AG04449 (cell line): ENCODE measurements at regions of chr1 and their contacts with region 1.

Region 1: DNA sequence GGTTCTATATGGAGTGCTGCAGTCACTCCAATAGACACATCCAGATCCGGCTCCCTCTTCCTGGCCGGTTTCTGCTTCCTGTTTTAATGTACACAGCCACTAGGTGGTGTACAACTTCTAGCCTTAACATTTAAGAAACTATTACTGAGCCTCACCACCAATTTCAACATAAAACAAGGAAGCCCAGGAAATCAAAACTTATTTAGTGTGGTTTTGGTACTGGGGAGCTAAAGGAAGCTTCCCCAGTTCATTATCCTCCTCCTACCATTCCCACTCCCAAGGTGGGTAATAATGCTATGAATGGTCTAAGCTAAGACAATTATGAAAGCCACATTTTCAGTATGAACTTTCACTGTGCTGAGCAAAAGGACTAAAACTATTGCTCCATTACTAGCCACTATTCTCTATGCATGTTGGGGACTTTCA is 25.5 kb upstream of the MTMR11 start:
- DNase-seq: peak; percentile 41
- H3K4me3 ChIP-seq: no peak overlapping the region
- CTCF ChIP-seq: peak; percentile 53

Region 2: GRCh38 chr1:149923626-149924025 is 38.5 kb before region 1 on chr1:
- CTCF ChIA-PET with region 1: no interaction called
- POLR2A ChIA-PET with region 1: no interaction called
- DNase-seq: no peak
- H3K4me3 ChIP-seq: no peak overlapping the region
- CTCF ChIP-seq: no peak

Region 3: DNA sequence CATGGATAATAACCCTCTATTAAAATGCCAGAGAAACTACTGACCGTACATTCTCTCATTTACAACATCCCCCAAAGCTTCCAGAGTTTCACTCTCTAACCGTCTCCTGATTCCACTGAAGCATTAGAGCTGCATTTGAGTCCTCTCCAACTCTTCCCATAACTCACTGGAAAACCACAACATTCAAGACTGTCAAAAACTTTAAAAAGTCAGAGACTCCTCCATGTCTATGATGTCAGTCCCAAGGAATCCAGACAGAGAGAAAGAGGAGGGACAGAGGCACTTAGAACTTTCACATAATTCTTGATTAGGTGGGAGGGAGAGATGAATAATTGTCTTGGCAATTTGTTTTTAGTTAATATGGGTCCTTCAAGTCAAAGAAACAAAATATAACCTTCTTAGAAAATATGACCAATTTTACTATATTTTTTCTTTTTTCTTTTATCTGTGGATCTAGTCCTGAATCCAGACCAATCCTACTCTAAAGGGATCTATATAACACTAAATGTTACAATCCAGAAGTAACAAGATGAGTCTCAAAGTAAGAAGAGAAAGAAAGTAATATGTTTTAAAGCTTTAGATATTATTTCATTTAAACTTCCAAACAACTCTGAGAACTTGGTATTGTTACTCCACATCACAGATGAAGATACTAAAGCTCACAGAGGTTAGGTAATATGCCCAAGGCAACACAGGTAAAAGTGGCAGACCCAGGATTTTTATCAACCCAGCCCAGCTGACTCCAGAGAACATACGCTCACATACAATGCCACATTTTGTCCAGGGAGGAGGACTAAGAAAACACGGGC is 24.6 kb after region 1 on chr1:
- CTCF ChIA-PET with region 1: interaction called, 13 read pairs
- POLR2A ChIA-PET with region 1: no interaction called
- DNase-seq: peak; percentile 75
- H3K4me3 ChIP-seq: no peak overlapping the region; the same call in 1 of the 2 replicates
- CTCF ChIP-seq: no peak

Region 4: GRCh38 chr1:150010393-150011115 is 48.4 kb after region 1 on chr1 and contains the start of gene OTUD7B:
- CTCF ChIA-PET with region 1: interaction called, 29 read pairs
- POLR2A ChIA-PET with region 1: no interaction called
- DNase-seq: no peak
- H3K4me3 ChIP-seq: peak within 1 kb of the TSS; percentile 87
- CTCF ChIP-seq: peak; percentile 18

Region 5: GRCh38 chr1:150053926-150054325 is 91.8 kb after region 1 on chr1:
- CTCF ChIA-PET with region 1: interaction called, 55 read pairs
- POLR2A ChIA-PET with region 1: interaction called, 3 read pairs
- DNase-seq: no peak
- H3K4me3 ChIP-seq: no peak overlapping the region
- CTCF ChIP-seq: no peak

Region 6: DNA sequence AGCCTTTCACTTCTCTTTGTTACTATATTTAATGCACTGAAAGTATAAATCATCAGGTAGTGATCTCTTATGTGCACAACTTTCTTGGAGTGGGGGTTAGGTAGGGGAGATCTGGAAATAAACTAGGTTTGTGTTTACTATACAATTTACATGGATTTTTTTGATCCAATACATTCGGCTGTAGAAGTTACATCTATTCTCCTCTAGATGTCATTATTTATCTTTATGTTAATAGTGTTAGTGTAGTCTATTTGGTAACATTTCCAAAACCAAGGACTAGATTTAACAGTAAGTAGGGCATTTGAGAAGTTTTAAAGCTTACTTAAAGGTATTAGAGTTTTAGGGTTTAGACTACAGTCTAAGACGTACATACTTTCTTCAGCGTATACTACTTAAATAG is 110.8 kb after region 1 on chr1:
- CTCF ChIA-PET with region 1: interaction called, 12 read pairs
- POLR2A ChIA-PET with region 1: no interaction called
- DNase-seq: no peak
- H3K4me3 ChIP-seq: no peak overlapping the region
- CTCF ChIP-seq: no peak

Region 7: DNA sequence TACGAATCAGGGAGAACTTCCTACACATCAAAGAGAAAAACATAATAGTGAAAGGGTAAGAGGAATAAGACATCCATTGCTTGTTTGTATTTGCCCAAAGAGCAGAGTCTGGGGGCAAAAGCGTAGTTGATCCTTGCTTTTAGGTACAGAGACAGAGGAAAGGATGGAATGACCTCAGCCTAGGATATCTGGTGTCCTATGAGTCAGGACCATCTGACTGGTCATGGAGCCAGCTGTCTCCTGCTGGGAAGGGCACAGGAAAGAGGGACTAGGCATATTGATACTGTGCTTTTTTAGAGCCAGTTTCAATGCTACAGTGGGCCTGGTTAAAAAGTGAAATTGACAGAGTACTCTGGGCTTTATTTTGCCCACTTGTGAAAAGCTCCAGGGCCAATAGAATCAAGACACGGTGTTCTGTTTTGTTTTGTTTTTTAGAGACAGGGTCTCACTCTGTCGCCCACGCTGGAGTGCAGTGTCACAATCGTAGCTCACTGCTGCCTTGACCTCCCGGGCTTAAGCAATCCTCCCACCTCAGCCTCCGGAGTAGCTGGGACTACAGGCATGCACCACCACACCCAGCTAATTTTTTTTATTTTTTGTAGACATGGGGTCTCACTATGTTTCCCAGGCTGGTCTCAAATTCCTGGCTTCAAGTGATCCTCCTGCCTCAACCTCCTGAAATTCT is 190.8 kb after region 1 on chr1:
- CTCF ChIA-PET with region 1: no interaction called
- POLR2A ChIA-PET with region 1: no interaction called
- DNase-seq: no peak
- H3K4me3 ChIP-seq: peak overlapping the region; percentile 2
- CTCF ChIP-seq: no peak

Region 8: DNA sequence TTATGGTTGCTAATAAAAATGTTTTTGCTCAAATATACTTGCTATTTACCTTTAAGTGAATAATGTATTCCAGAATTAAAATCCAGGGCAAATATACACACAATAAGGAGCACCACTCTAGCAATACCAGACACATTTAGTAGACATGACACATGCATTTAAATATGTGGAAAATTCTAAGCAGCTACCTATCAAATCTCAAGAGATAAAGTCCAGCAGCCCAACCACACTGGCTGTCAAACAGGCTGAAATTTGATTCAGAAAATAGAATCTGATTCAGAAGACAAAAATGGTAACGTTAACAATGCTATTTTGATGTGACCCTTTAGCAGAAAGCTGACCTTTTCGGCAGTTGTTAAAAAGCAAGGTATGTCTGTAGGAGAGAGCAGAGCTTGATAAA is 229.9 kb after region 1 on chr1:
- CTCF ChIA-PET with region 1: interaction called, 22 read pairs
- POLR2A ChIA-PET with region 1: no interaction called
- DNase-seq: no peak
- H3K4me3 ChIP-seq: no peak overlapping the region
- CTCF ChIP-seq: no peak